Dendritic cell treated with granulocyte-macrophage colony-stimulating factor and Interleukin-4, amounts not matched to agents 40 ng/mL and 50 ng/mL, for 4 days (primary cell): ENCODE measurements at regions of chr9 and their contacts with region 1.

Region 1: DNA sequence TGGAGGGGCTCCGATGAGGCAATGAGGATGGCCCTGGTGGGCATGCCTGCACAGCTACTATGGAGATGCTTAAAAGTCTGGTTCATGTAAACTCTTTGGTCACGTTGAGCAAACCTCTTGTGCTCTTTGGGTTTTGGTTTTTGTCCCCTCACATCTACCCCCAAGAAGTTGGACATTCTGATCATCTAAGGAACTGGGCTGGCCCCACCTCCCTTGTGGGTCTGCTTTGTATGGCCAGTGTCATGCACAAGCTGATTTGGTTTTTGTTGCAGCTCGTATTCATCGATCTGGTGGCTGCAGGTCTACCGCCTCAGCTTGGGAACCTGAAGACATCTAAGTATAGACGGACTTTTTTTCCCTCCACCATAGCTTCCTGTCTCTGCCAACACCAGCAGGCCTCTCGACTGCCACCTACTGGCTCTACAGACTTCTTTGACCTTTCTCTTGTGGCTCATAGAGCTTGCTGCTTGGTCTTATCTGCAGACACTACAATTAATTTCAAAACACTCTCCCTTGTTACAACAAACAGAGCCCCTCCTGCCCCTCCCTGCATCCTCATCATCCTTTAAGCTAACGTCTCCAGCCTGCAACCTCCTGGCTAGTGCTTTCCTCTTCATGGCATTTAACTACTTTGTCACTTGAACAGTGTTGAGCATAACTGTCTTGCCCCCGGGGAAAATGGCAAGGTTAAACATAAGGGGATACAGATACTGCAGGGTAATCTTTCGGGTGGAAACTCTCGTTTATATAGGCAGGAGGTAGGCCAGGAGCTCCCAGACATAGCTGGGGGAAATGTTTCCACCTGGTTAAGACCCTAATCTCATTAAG is 34.5 kb downstream of the TSTD2 start:
- H3K4me3 Mint-ChIP-seq: no peak overlapping the region
- H3K27ac Mint-ChIP-seq: no peak overlapping the region
- H3K4me1 Mint-ChIP-seq: peaks cover 13% of the 10 kb centered on the region
- H3K27me3 Mint-ChIP-seq: peaks cover 2% of the 10 kb centered on the region

Region 2: GRCh38 chr9:97411789-97412625 is 186.7 kb before region 1 on chr9 and contains the start of gene TDRD7:
- intact Hi-C with region 1: loop called (anchors 1 kb)
- H3K4me3 Mint-ChIP-seq: peak within 1 kb of the TSS; percentile 87
- H3K27ac Mint-ChIP-seq: peak within 1 kb of the TSS; percentile 82
- H3K4me1 Mint-ChIP-seq: peaks cover 49% of the 10 kb centered on the region
- H3K27me3 Mint-ChIP-seq: no peaks in the 10 kb centered on the region

Region 3: DNA sequence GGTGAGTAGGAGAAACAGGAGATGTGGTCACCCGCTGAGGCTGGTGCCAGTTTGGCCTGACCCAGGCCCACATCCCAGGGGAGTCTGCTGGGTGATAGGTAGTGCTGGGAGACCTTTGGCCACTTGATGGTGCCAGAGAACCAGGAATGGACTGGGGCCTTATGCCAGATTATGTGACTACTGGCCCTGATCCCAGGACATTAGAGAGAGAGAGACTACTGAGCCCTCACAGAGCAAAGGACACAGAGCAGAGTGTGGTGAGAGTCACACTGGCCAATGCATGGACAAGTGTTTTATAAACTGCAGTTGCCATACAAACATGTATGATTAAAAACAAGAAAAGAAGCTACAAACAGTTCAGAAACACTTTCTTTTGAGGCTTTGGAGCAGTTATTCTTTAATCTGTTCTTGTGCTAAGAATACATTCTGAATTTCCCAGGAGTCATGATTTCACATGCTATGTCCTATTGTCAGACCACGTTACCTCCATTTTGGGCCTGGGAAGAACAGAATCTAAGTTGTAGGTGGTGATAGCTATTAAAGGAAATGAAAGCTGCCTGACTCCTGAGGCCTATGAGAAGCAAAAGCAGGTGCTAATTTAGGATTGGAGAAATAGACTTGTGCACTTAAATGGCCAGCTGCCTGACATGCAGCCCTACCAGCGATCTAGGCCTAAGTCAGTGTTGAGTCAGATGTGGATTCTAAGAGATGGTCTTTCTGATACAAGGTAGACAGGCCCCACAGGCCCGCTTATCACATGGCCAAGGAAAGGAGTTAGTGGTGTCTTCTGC is 129.8 kb before region 1 on chr9:
- intact Hi-C with region 1: loop called (anchors 1 kb)
- H3K4me3 Mint-ChIP-seq: no peak overlapping the region
- H3K27ac Mint-ChIP-seq: no peak overlapping the region
- H3K4me1 Mint-ChIP-seq: peaks cover 4% of the 10 kb centered on the region
- H3K27me3 Mint-ChIP-seq: no peaks in the 10 kb centered on the region

Region 4: DNA sequence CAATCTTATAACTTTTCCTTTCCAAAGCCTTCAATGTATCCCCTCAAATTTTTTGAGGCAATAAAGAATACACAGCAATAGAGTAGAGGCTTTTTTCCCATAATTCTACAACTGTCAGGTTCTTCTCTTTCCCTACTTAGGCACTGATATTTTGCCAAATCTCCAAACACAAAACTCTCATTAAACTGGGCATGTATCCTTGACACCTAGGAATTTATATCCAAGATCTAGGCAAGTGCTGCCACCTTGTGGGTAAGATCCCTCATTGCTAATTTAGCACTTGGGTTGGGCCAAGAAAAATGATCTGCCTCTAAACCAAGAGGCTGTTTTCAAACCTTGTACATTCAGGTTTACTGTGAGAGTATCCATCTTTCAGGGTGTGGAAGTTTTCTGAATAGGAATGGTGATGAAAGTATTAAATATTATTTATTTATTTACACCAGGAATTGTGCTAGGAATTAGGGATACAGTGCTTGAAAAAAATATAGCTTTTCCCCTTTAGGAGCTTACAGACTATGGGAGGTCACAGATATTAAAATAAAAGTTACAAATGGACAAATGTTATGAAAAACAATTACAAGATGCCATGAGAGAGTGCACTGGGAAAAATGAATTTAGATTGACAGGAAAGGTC is 16.9 kb after region 1 on chr9:
- intact Hi-C with region 1: no loop called
- H3K4me3 Mint-ChIP-seq: no peak overlapping the region
- H3K27ac Mint-ChIP-seq: no peak overlapping the region
- H3K4me1 Mint-ChIP-seq: peaks cover 22% of the 10 kb centered on the region
- H3K27me3 Mint-ChIP-seq: no peaks in the 10 kb centered on the region

Region 5: DNA sequence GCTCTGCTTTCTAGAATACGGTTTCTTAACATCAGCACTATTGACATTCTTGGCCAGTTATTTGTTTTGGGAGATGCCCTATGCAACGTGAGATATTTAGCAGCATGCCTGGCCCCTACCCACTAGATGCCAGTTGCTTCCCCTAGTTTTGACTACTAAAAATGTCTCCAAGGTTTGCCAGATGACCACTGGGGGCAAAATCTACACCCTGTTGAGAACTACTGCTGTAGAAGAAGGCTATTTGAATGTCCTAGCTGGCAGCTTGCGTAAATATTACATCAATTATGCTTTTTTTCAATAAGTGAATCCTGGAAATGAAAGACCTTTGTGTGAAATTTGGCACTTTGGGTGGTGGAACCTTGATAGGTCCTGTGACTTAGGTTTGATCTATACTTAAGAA is 40.0 kb after region 1 on chr9:
- intact Hi-C with region 1: no loop called
- H3K4me3 Mint-ChIP-seq: no peak overlapping the region
- H3K27ac Mint-ChIP-seq: no peak overlapping the region
- H3K4me1 Mint-ChIP-seq: peaks cover 40% of the 10 kb centered on the region
- H3K27me3 Mint-ChIP-seq: no peaks in the 10 kb centered on the region